ENCODE measurements at regions of chr10 and their contacts with region 1.

Region 1: GRCh38 chr10:89029785-89030437 is 39.3 kb downstream of the FAS start:
- DNase-seq: peak; percentile 29
- H3K4me3 ChIP-seq: no peak overlapping the region
- CTCF ChIP-seq: peak; percentile 75

Region 2: GRCh38 chr10:88990384-88991160 is 39.3 kb before region 1 on chr10 and contains the start of gene FAS:
- CTCF ChIA-PET with region 1: interaction called, 13 read pairs
- POLR2A ChIA-PET with region 1: no interaction called
- DNase-seq: no peak
- H3K4me3 ChIP-seq: peak within 1 kb of the TSS; percentile 77
- CTCF ChIP-seq: no peak

Region 3: DNA sequence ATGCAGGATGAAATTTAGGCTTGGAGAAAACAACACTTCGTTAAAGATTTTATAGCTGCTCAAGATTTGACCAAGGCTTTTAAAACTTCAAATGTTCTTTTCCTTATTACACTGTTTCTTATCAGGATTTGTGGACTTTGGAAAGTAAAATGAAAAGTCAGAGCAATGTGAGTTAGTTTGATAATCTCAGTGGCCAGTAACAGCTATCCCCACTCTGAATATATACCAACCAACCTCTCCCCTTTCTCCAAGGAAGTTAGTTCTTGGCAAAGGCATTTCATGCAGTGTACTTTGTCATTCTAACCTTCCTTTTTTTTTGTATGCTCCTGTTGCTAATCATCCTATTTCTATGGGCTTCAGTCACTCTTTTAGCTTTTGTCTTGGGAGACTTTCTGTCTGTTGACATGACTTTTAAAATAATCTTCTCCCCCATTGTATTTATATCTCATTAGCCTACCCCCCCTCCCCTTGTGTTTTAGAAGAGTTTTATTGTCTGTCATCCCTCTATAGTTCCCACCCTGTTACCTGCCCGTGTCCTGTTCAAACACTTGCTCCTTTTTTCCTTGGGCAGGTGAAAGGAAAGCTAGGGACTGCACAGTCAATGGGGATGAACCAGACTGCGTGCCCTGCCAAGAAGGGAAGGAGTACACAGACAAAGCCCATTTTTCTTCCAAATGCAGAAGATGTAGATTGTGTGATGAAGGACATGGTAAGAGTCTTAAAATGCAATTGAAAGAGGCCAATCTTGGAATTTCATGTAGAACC is 22.6 kb before region 1 on chr10:
- CTCF ChIA-PET with region 1: interaction called, 32 read pairs
- POLR2A ChIA-PET with region 1: no interaction called
- DNase-seq: no peak
- H3K4me3 ChIP-seq: no peak overlapping the region
- CTCF ChIP-seq: no peak

Region 4: DNA sequence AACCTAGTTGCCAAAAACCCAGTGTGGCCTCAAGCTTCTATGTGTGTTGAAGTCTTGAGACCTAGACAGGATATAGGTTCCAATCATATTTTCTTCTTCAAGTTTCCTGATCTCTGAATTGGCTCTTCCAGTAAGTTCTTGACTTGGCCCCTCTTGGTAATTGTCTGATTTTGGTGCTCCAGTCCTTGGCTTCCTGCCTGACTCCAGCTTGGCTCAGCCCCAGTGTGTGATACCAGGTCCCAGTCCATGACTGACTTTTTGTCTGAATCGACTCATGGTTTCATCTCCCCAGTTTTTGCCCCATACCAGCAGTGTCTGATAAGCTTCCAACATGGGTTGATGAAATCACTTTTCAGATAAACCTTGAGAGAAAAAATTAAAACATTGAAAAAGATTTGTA is 33.0 kb after region 1 on chr10:
- CTCF ChIA-PET with region 1: interaction called, 16 read pairs
- POLR2A ChIA-PET with region 1: interaction called, 3 read pairs
- DNase-seq: no peak
- H3K4me3 ChIP-seq: no peak overlapping the region
- CTCF ChIP-seq: no peak

Region 5: DNA sequence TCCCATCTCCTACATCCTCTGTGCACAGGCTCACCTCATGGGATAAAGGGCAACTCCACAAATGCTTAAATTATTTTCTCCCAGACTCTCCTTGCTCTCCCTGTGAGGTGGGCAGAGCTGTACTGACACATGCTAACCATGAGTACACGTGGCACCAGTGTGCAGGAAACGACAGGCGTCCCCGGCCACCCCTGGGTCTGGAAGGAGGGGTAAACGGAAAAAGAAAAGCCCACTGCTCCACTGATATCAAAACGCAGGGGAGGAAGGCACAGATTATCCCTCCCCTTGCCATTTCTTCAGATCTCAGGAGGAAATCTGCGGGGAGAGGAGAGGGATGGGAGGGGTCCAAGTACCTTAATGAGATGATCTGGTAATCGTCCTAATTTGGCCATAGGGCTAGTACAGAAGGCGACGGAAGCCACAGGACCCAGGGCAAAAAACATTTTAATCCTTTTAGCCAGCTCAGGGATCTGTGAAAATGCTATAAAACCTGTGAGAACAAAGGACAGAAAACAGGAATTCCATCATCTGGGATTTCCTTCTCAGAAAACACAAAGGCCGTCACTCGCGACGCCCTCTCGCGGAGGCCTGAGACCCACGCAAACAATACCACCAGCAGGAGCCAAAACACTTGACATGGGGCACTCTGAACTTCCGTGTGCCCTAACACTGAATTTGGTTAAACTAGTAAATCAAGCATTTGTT is 195.0 kb after region 1 on chr10:
- CTCF ChIA-PET with region 1: interaction called, 151 read pairs
- POLR2A ChIA-PET with region 1: no interaction called
- DNase-seq: no peak
- H3K4me3 ChIP-seq: no peak overlapping the region
- CTCF ChIP-seq: no peak